ENCODE measurements at regions of chr14 and their contacts with region 1.

Region 1: DNA sequence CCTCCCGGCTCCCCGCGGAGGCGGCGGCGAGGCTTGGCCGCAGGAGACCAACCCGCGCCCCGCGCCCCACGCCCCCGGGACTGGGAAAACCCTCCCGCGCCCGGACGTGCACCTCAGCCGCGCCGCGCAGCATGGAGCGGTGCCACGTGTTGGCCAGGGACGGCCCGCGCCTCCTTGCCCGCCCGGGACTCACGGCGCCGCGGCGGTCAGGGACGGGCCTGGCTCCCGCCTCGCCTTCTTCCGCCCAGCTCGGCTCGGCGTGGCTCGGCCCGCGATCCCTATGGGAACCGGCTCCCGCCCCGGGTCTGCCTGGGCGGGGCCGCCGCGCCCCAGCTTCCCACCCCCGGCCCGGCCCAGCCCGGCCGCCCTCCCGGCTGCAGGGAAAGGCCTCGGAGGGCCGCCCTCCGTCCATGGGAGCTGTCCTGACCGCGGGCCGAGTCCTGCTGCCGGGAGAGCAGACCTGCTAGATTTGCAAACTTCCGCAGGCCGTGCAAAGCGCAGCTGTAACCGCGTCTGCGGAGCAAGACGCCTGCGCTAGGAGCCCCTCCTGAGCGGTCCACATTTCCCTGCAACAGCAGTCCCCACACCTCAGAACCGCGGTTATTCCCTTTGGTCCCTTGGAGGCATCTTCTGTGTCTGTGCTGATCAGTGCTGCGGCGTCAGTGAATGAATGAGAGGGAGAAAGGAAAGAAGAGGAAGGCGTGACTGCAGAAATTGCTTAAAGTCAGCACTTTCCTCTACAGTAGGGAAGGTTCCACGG is at the start of gene CDKL1:
- DNase-seq: peak; percentile 43
- H3K4me3 ChIP-seq: peak within 1 kb of the TSS; percentile 64 to 68
- H3K27ac ChIP-seq: peak within 1 kb of the TSS; percentile 78 to 83
- H3K4me1 ChIP-seq: no peaks in the 10 kb centered on the region
- H3K27me3 ChIP-seq: no peaks in the 10 kb centered on the region
- CTCF ChIP-seq: no peak
- POLR2A ChIP-seq: peak; percentile 11
- total RNA-seq, gene CDKL1: 3.4 to 18.5 TPM

Region 2: DNA sequence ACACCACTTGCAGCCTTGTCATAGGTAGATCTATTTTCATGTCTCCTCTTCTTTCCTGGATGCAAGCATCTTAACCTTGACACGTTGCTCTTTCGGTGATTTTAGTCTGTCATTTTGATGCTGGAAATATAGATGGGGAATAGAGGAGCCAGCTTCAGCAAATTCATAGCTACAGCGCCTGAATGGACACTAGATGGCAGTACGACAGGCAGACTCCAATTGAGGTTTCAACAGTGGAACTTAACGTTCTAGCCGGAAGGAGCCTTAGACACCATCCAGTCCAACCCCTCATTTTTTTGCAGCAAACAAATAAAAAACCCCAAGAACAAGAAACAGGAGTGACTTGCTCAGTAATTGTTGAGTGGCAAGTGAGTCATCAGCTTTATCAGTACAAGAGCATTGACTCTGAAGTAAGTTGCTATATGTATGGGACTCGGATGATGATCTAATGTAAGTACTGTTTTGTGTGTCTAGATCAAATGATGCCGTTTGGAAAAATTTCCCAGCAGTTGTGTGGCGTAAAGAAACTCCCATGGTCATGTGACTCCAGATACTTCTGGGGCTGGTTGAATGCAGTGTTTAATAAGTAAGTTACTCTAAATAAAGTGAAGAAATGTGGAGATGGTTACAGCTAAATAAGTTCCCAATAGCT is 75.7 kb before region 1 on chr14:
- intact Hi-C with region 1: loop called (anchors 5 kb)
- DNase-seq: peak; percentile 70
- H3K4me3 ChIP-seq: no peak overlapping the region
- H3K27ac ChIP-seq: peak overlapping the region; percentile 48 to 57
- H3K4me1 ChIP-seq: no peaks in the 10 kb centered on the region
- H3K27me3 ChIP-seq: no peaks in the 10 kb centered on the region
- CTCF ChIP-seq: peak; percentile 65 to 81 (median 76)
- POLR2A ChIP-seq: no peak

Region 3: DNA sequence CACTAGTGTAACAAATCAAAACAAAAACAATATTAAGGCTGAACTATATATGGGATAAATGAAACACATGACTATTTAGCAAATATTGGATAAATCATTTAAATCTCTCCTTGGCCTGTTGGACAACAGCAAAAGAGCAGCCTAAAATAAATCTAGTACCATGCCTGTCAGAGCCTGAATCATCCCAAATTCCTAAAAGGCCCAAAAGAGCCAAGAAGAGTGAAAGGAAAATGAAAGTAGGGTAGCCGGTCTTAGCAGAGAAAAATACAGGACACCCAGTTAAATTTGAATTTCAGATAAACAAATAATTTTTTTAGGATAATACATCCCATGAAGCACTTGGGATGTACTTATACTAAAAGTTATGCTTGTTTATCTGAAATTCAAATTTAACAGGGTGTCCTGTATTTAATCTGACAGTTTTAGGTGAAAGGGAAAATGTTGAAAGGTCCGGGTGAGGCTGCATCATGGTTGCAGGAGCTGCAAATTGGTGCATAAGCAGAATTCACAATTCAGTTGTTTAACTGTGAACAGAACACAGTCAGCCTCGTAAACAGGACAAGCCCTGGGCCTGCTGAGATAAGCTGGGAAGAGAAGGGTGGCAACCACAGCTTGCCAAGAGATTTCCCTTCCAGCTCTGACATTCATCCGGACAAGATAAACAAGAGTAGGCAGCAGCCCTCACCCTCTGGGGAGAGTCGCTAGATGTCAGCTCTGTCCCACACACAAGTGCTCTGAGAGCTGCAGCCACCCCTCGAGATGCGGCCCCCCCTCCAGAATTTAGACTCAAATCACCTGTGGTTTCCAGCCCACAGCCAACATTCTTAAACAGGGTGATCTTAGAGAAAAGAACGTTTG is 54.4 kb before region 1 on chr14:
- intact Hi-C with region 1: loop called (anchors 5 kb)
- DNase-seq: peak; percentile 80
- H3K4me3 ChIP-seq: peak overlapping the region in 1 of 2 donors; percentile 1
- H3K27ac ChIP-seq: peak overlapping the region; percentile 37 to 67
- H3K4me1 ChIP-seq: peaks cover 13% of the 10 kb centered on the region
- H3K27me3 ChIP-seq: no peaks in the 10 kb centered on the region
- CTCF ChIP-seq: peak in 3 of 4 experiments; percentile 43 to 54 (median 46)
- POLR2A ChIP-seq: no peak

Measured in prostate gland (tissue), 2 donors.